Caco-2 (cell line): ENCODE measurements at regions of chr5 and their contacts with region 1.

Region 1: DNA sequence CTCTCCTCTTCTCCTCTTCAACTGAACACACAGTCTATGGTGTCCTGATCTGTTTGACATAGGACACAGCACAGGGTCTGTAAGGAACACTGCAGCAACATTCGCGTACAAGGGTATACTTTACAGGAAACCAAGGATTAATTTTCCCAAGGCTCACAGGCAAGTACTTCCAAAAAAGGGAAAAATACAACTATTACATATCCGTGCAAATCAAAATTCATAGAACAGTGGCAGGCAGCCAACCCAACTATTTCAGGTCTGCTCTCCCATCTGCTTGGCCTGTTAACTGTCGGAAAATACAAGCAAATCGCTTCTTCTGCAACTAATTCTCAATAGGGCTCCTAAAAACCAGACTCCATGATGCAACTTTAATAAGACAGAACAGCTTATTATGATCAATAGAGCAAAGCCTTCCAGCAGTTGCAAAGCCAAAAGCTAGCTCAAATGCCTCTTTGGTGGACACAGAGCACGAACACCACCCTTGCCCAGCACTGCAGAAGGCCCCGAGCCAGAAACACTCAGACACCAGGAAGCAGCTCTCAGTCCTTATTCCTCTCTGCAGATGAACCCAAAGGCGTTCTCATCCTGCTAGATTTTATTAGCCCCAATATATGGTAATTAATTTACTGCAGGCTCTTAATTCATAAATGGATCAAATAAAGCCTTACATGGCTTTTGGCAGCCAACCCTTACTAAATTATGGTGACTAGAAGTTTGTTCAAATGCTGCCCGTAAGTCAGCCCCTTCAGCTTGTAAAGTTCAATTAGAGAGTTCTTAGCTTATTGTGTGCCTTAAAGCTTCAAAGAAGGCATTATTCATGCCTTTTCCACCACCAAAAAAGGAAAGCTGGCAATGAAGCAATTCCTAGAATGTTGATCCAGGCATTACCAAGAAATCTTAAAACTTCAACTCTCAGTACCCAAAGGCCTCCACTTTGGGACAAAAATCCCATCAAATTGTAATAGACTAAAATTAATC is 68.8 kb downstream of the ZNF608 start:
- DNase-seq: no peak
- H3K4me3 ChIP-seq: no peak overlapping the region
- H3K4me3 Mint-ChIP-seq: no peak overlapping the region
- H3K27ac Mint-ChIP-seq: peak overlapping the region; percentile 37
- H3K4me1 ChIP-seq: peaks cover 59% of the 10 kb centered on the region
- H3K4me1 Mint-ChIP-seq: peaks cover 42% of the 10 kb centered on the region
- H3K27me3 ChIP-seq: no peaks in the 10 kb centered on the region
- H3K27me3 Mint-ChIP-seq: no peaks in the 10 kb centered on the region
- CTCF ChIP-seq: no peak

Region 2: GRCh38 chr5:124343451-124343867 is 334.2 kb before region 1 on chr5:
- CTCF ChIA-PET with region 1: no interaction called
- POLR2A ChIA-PET with region 1: no interaction called
- intact Hi-C with region 1: no loop called
- DNase-seq: no peak
- H3K4me3 ChIP-seq: no peak overlapping the region
- H3K4me3 Mint-ChIP-seq: no peak overlapping the region
- H3K27ac Mint-ChIP-seq: no peak overlapping the region
- H3K4me1 ChIP-seq: peaks cover 4% of the 10 kb centered on the region; the same call in 1 of the 2 replicates
- H3K4me1 Mint-ChIP-seq: no peaks in the 10 kb centered on the region
- H3K27me3 ChIP-seq: no peaks in the 10 kb centered on the region
- H3K27me3 Mint-ChIP-seq: no peaks in the 10 kb centered on the region
- CTCF ChIP-seq: no peak

Region 3: GRCh38 chr5:124649491-124650146 is 28.0 kb before region 1 on chr5:
- CTCF ChIA-PET with region 1: no interaction called
- POLR2A ChIA-PET with region 1: no interaction called
- intact Hi-C with region 1: loop called (anchors 1 kb)
- DNase-seq: no peak
- H3K4me3 ChIP-seq: no peak overlapping the region
- H3K4me3 Mint-ChIP-seq: no peak overlapping the region
- H3K27ac Mint-ChIP-seq: no peak overlapping the region
- H3K4me1 ChIP-seq: peaks cover 33% of the 10 kb centered on the region
- H3K4me1 Mint-ChIP-seq: peaks cover 9% of the 10 kb centered on the region
- H3K27me3 ChIP-seq: no peaks in the 10 kb centered on the region
- H3K27me3 Mint-ChIP-seq: no peaks in the 10 kb centered on the region
- CTCF ChIP-seq: no peak

Region 4: GRCh38 chr5:124655922-124656511 is 21.6 kb before region 1 on chr5:
- CTCF ChIA-PET with region 1: interaction called, 3 read pairs
- POLR2A ChIA-PET with region 1: no interaction called
- intact Hi-C with region 1: loop called (anchors 1 kb)
- DNase-seq: peak; percentile 80 to 87
- H3K4me3 ChIP-seq: no peak overlapping the region
- H3K4me3 Mint-ChIP-seq: no peak overlapping the region
- H3K27ac Mint-ChIP-seq: no peak overlapping the region
- H3K4me1 ChIP-seq: peaks cover 72% of the 10 kb centered on the region
- H3K4me1 Mint-ChIP-seq: peaks cover 9% of the 10 kb centered on the region
- H3K27me3 ChIP-seq: no peaks in the 10 kb centered on the region
- H3K27me3 Mint-ChIP-seq: no peaks in the 10 kb centered on the region
- CTCF ChIP-seq: no peak